ENCODE measurements at regions of chr6 and their contacts with region 1.

Region 1: GRCh38 chr6:53090576-53090975 is 25.4 kb downstream of the FBXO9 start:
- DNase-seq: no peak
- ATAC-seq: no peak

Region 2: GRCh38 chr6:52995913-52996645 is 94.5 kb before region 1 on chr6:
- intact Hi-C with region 1: no loop called
- DNase-seq: peak; percentile 65
- ATAC-seq: no peak

Region 3: GRCh38 chr6:53014063-53014462 is 76.5 kb before region 1 on chr6:
- intact Hi-C with region 1: loop called (anchors 10 kb)
- DNase-seq: no peak
- ATAC-seq: no peak

Measured in Right ventricle myocardium superior (tissue), 1 donor.